ENCODE measurements at regions of chr15 and their contacts with region 1.

Region 1: DNA sequence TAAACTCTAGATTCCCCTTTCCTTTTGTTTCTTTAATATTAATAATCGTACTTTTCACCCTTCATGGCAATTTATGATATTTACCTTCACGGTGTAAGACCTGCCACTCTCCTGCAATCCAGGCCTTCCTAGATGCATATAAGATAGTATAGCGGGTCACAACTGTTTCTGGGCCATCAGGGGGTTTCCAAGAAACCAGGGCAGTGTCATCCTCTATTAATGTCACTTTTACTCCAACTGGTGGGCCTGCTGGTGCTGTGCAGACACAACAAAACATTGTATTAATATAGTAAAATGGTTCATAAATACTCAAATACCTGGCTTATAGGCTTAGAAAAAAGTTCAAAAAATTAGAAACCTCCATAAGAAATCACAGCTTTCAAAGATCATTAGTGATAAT is 48.9 kb upstream of the PYGO1 start:
- DNase-seq: no peak
- H3K4me3 Mint-ChIP-seq: no peak overlapping the region
- H3K27ac Mint-ChIP-seq: no peak overlapping the region
- H3K4me1 Mint-ChIP-seq: no peaks in the 10 kb centered on the region
- H3K27me3 Mint-ChIP-seq: no peaks in the 10 kb centered on the region

Region 2: GRCh38 chr15:55372701-55373440 is 264.2 kb before region 1 on chr15:
- CTCF ChIA-PET with region 1: no interaction called
- intact Hi-C with region 1: no loop called
- DNase-seq: no peak
- H3K4me3 Mint-ChIP-seq: no peak overlapping the region
- H3K27ac Mint-ChIP-seq: no peak overlapping the region
- H3K4me1 Mint-ChIP-seq: peaks cover 7% of the 10 kb centered on the region
- H3K27me3 Mint-ChIP-seq: no peaks in the 10 kb centered on the region

Region 3: GRCh38 chr15:55514414-55514850 is 122.7 kb before region 1 on chr15:
- CTCF ChIA-PET with region 1: no interaction called
- intact Hi-C with region 1: loop called (anchors 2 kb)
- DNase-seq: no peak
- H3K4me3 Mint-ChIP-seq: no peak overlapping the region
- H3K27ac Mint-ChIP-seq: no peak overlapping the region
- H3K4me1 Mint-ChIP-seq: no peaks in the 10 kb centered on the region
- H3K27me3 Mint-ChIP-seq: peaks cover 2% of the 10 kb centered on the region

Region 4: DNA sequence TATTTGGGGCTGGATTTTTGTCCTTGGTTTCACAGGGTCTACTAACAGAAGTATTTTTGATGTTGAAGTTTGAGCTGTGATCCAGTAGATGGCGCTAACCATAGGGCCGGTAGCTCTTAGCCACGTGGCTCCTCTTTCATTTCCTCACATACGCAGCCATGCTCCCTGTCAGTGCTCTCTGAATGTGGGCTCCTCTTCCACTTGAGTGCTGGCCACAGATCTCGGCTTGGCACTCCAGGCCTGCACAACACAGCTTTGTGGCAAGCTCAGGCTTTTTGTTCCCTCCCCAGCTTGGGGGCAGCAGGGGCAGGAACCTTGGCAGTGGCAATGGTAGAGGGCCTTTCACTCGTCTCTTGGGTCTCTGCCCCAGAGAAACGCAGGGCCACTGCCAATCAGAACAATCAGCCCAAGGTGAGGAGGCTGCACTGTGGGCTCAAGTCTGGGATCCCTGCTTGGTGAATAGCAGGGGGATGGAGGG is 110.5 kb before region 1 on chr15:
- CTCF ChIA-PET with region 1: interaction called, 5 read pairs
- intact Hi-C with region 1: loop called (anchors 1 kb)
- DNase-seq: peak; percentile 31
- H3K4me3 Mint-ChIP-seq: no peak overlapping the region
- H3K27ac Mint-ChIP-seq: no peak overlapping the region
- H3K4me1 Mint-ChIP-seq: no peaks in the 10 kb centered on the region
- H3K27me3 Mint-ChIP-seq: peaks cover 24% of the 10 kb centered on the region